Activated T-helper 2 cell treated with anti-CD3 and anti-CD28 coated beads, Interferon-gamma antibody, Interleukin-2, Interleukin-4, amounts not matched to agents 10 μg/mL and 5 μg/mL and 100 μg/mL, durations not matched to agents 14 hours and 24 hours and 36 hours (primary cell): ENCODE measurements at regions of chr2 and their contacts with region 1.

Region 1: DNA sequence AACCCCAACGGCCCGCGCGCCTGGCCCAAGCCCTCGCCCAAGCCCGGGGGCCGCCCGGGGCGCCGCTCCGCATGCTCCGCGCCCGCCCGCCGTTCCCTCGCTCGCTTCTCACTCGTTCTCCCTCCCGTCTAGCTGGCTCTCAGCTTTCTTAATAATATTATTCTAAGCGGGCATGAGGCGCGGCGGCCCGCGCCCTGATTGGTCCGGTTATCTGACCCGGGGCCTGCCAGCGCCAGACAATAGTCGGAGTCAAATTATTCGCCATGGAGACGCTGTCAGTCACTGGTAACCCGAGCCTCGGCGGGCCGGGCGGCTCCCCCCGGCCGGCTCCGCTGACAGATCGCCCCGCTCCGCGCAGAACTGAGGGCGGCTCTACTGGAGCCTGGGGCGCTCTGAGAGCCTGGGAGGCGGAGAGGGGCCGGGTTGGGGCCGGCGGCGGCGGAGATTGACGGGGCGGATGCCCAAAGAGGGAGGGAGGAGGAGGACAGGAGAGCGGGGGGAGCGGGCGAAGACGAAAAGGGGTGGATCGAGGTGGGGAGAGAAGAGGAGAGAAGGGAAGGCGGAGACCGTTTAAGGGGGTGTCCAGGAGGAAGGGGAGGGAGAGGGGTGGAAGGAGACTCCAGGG is at the start of gene SIX2:
- DNase-seq: no peak
- H3K4me3 Mint-ChIP-seq: peak within 1 kb of the TSS; percentile 79
- H3K27ac Mint-ChIP-seq: no peak within 1 kb of the TSS
- H3K4me1 Mint-ChIP-seq: peaks cover 6% of the 10 kb centered on the region
- H3K27me3 Mint-ChIP-seq: peaks cover 83% of the 10 kb centered on the region
- total RNA-seq, gene SIX2: not detected in 2 replicates

Region 2: GRCh38 chr2:44429034-44429433 is 580.4 kb before region 1 on chr2:
- intact Hi-C with region 1: no loop called
- DNase-seq: no peak
- H3K4me3 Mint-ChIP-seq: no peak overlapping the region
- H3K27ac Mint-ChIP-seq: no peak overlapping the region
- H3K4me1 Mint-ChIP-seq: peaks cover 5% of the 10 kb centered on the region
- H3K27me3 Mint-ChIP-seq: no peaks in the 10 kb centered on the region

Region 3: GRCh38 chr2:44802777-44803424 is 206.5 kb before region 1 on chr2:
- intact Hi-C with region 1: loop called (anchors 5 kb)
- DNase-seq: no peak
- H3K4me3 Mint-ChIP-seq: no peak overlapping the region
- H3K27ac Mint-ChIP-seq: no peak overlapping the region
- H3K4me1 Mint-ChIP-seq: peaks cover 29% of the 10 kb centered on the region
- H3K27me3 Mint-ChIP-seq: peaks cover 80% of the 10 kb centered on the region

Region 4: GRCh38 chr2:44941551-44942234 is 67.7 kb before region 1 on chr2 and contains the start of gene SIX3:
- intact Hi-C with region 1: loop called (anchors 2 kb)
- DNase-seq: peak; percentile 60
- H3K4me3 Mint-ChIP-seq: peak within 1 kb of the TSS; percentile 73
- H3K27ac Mint-ChIP-seq: peak within 1 kb of the TSS; percentile 26
- H3K4me1 Mint-ChIP-seq: peaks cover 22% of the 10 kb centered on the region
- H3K27me3 Mint-ChIP-seq: peaks cover 80% of the 10 kb centered on the region
- total RNA-seq, gene SIX3: 0.25 and 0.34 TPM in 2 replicates

Region 5: GRCh38 chr2:44955593-44956392 is 53.6 kb before region 1 on chr2:
- intact Hi-C with region 1: loop called (anchors 2 kb)
- DNase-seq: peak; percentile 70
- H3K4me3 Mint-ChIP-seq: no peak overlapping the region
- H3K27ac Mint-ChIP-seq: no peak overlapping the region
- H3K4me1 Mint-ChIP-seq: peaks cover 14% of the 10 kb centered on the region
- H3K27me3 Mint-ChIP-seq: peaks cover 62% of the 10 kb centered on the region

Region 6: GRCh38 chr2:44981136-44982108 is 28.0 kb before region 1 on chr2:
- intact Hi-C with region 1: loop called (anchors 2 kb)
- DNase-seq: peak; percentile 47
- H3K4me3 Mint-ChIP-seq: no peak overlapping the region
- H3K27ac Mint-ChIP-seq: no peak overlapping the region
- H3K4me1 Mint-ChIP-seq: peaks cover 2% of the 10 kb centered on the region
- H3K27me3 Mint-ChIP-seq: peaks cover 17% of the 10 kb centered on the region

Region 7: GRCh38 chr2:45169339-45170190 is 160.2 kb after region 1 on chr2:
- intact Hi-C with region 1: loop called (anchors 2 kb)
- DNase-seq: no peak
- H3K4me3 Mint-ChIP-seq: peak overlapping the region; percentile 26
- H3K27ac Mint-ChIP-seq: no peak overlapping the region
- H3K4me1 Mint-ChIP-seq: peaks cover 4% of the 10 kb centered on the region
- H3K27me3 Mint-ChIP-seq: peaks cover 75% of the 10 kb centered on the region

Region 8: GRCh38 chr2:45494269-45494977 is 485.0 kb after region 1 on chr2:
- intact Hi-C with region 1: loop called (anchors 10 kb)
- DNase-seq: no peak
- H3K4me3 Mint-ChIP-seq: no peak overlapping the region
- H3K27ac Mint-ChIP-seq: no peak overlapping the region
- H3K4me1 Mint-ChIP-seq: peaks cover 34% of the 10 kb centered on the region
- H3K27me3 Mint-ChIP-seq: no peaks in the 10 kb centered on the region